Activated CD4-positive, alpha-beta T cell treated with anti-CD3 and anti-CD28 coated beads for 36 hours (primary cell): ENCODE measurements at regions of chr1 and their contacts with region 1.

Region 1: DNA sequence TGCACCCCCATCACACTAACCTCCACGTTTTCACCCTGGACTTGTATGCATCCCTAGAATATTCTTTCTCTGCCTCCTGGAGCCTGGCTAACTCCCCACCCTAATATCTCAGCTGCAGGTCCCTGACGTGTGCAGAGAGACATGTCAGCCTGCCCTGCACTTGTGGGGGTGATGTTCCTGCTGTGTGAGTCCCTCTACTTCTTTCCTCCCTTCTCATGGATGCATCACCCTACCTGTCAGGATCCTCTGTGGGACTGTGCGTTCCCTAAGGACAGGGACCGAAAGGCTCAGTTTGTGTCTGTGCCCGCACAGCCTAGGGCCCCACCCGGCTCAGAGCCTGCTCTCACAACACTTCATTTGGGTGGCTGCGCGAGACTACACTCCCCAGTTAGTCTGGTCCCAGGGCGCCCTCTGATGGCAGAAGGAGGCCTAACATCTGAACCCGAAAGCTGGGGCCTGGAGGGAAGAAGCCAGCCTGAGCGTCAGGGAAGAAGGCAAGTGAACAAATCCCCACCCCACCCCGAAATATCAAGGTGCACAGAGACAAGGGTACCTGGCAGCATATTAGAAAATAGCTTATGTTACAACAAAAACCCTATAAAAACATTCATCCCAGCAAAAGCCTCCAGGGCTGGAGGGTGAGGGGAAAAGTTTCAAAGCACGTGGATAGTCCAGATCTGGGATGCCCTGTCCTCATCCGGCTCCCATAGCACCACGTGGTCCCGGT is 3.7 kb downstream of the CD52 start:
- DNase-seq: peak; percentile 97
- ATAC-seq: peak; percentile 62
- H3K4me3 Mint-ChIP-seq: peak overlapping the region; percentile 59
- H3K27ac Mint-ChIP-seq: peak overlapping the region; percentile 96
- H3K4me1 Mint-ChIP-seq: peaks cover 51% of the 10 kb centered on the region
- H3K27me3 Mint-ChIP-seq: no peaks in the 10 kb centered on the region

Region 2: DNA sequence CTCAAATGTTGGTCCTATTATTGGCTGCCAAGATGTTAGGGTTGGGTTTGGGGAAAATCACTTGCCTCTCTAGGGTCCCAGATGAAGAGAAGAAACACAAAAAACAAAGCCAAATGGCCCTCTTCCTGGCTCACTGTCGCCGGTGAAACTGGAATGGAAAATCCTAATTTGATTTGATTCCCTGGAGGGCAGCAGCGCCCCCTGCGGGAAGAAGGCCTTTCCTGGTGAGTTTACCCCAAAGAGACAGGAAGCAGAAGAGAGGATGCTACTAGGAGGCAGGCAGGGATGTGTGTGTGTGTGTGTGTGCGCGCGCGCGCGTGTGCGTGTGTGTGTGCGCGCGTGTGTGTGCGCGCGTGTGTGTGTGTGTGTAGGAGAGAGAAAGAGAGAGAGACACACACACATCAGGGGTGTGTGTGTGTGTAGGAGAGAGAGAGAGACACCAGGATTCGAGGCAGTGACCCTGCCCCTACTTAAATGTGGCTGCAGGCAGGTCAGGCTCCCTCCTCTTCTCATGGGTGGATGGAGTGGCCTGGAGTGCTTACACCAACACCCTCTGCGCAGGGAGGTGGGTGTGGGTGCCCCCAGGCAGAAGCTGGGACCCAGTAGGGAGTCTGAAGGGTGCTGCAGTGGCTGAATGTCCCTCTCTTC is 524.5 kb before region 1 on chr1:
- CTCF ChIA-PET with region 1: no interaction called
- POLR2A ChIA-PET with region 1: no interaction called
- intact Hi-C with region 1: no loop called
- DNase-seq: peak; percentile 93
- ATAC-seq: peak; percentile 61
- H3K4me3 Mint-ChIP-seq: peak overlapping the region; percentile 56
- H3K27ac Mint-ChIP-seq: peak overlapping the region; percentile 95
- H3K4me1 Mint-ChIP-seq: peaks cover 62% of the 10 kb centered on the region
- H3K27me3 Mint-ChIP-seq: no peaks in the 10 kb centered on the region

Region 3: DNA sequence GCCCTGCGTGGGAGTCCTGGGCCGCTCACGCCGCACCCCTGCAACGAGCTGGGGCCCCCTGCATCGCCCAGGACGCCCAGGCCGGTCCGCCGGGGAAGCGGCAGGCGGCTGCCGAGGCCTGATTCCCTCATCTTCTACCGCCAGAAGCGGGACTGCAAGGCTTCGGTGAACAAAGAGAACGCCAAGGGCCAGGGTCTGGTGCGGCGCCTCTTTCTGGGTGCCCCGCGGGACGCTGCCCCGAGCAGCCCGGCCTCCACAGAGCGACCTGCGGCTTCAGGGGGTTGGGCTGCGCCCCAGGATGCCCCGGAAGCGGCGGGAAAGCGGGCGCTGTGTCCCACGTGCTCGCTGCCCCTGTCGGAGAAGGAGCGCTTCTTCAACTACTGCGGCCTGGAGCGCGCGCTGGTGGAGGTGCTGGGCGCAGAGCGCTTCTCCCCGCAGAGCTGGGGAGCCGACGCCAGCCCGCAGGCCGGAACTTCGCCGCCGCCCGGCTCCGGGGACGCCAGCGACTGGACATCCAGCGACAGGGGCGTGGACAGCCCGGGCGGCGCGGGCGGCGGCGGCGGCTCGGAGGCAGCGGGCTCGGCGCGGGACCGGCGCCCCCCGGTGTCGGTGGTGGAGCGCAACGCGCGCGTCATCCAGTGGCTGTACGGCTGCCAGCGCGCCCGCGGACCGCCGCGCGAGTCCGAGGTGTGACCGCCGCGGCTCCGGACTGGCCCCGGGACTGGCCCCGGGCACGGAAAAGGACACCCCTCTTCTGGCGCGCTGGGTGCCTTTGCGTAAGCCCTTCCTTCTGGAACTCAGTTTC is 159.9 kb before region 1 on chr1:
- CTCF ChIA-PET with region 1: interaction called, 4 read pairs
- POLR2A ChIA-PET with region 1: no interaction called
- intact Hi-C with region 1: loop called in 1 of 2 experiments (anchors 2 kb)
- DNase-seq: peak; percentile 67
- ATAC-seq: peak; percentile 47
- H3K4me3 Mint-ChIP-seq: peak overlapping the region; percentile 39
- H3K27ac Mint-ChIP-seq: no peak overlapping the region
- H3K4me1 Mint-ChIP-seq: peaks cover 10% of the 10 kb centered on the region
- H3K27me3 Mint-ChIP-seq: peaks cover 15% of the 10 kb centered on the region

Region 4: DNA sequence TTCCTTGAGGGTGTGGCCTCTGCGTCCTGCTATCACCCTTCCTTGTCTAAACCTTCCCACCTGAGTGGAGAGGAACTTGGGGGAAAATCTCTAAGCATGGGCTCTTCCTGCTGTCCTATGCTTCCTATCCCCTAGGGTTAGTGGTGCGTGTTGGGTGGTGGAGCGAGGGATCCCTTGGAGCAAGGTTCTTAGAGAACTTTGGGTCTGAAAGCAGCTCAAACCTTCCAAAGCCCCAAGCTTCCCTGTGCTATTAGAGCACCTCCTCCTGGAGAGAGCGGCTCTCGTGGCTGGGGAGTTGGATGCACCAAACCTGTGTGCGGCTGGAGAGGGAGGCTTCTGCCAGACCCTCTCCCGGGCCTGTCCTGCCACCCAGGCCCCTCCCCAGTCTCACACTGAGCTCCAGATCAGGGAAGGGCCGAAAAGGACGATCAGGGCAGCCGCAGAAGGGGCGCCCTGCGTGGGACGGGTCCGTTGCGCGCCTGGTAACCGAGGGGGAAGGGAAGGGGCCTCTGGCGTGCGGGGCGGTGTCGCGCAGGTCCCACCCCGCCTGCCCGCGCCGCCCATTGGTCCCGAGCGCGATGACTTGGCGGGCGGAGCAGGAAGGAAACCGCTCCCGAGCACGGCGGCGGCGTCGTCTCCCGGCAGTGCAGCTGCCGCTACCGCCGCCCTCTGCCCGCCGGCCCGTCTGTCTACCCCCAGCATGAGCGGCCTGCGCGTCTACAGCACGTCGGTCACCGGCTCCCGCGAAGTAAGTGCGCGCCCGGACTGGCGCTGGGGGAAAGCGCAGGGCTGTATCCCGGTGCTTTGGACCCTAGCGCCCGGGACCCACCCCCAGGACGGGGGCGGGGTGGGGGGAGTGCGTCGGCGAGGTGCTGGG is 41.8 kb before region 1 on chr1 and contains the start of gene SH3BGRL3:
- CTCF ChIA-PET with region 1: interaction called, 399 read pairs
- POLR2A ChIA-PET with region 1: interaction called, 16 read pairs
- intact Hi-C with region 1: loop called (anchors 1 kb)
- DNase-seq: peak; percentile 92
- ATAC-seq: peak; percentile 56
- H3K4me3 Mint-ChIP-seq: peak within 1 kb of the TSS; percentile 78
- H3K27ac Mint-ChIP-seq: peak within 1 kb of the TSS; percentile 94
- H3K4me1 Mint-ChIP-seq: peaks cover 82% of the 10 kb centered on the region
- H3K27me3 Mint-ChIP-seq: no peaks in the 10 kb centered on the region
- total RNA-seq, gene SH3BGRL3: 267 to 381 TPM

Region 5: GRCh38 chr1:26336477-26337205 is 15.2 kb after region 1 on chr1:
- CTCF ChIA-PET with region 1: no interaction called
- POLR2A ChIA-PET with region 1: no interaction called
- intact Hi-C with region 1: loop called in 1 of 2 experiments (anchors 1 kb)
- DNase-seq: peak; percentile 89
- ATAC-seq: peak; percentile 93
- H3K4me3 Mint-ChIP-seq: peak overlapping the region; percentile 75
- H3K27ac Mint-ChIP-seq: no peak overlapping the region
- H3K4me1 Mint-ChIP-seq: no peaks in the 10 kb centered on the region
- H3K27me3 Mint-ChIP-seq: no peaks in the 10 kb centered on the region

Region 6: DNA sequence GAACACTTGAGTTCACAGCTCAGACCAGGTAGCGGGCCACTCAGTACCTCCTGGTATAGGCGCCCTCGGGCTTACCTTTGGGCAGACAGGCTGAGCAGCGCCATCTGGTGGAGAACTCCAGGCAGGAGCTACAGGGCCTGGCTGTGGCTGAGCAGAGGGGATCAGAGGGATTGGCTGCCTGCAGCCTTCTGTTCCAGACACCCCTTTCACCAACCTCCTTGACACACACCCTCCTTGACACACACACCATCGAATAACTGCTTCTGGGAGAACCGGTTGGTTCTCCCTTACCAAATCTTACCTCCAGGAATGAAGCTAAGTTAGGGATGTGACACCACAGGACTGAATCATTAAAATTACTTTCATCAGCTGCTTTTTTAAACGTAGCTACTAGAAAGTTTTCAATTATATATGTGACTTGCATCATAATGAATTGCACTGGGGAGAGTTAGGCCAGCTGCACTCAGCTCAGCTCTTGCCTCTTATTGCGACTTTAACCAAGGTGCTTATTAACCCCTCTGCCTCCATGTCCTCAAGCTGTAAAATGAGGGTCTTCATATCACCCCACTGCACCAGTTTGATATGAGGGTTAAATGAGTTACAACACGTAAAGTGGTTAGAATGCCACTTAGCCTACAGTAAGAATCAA is 95.8 kb after region 1 on chr1:
- CTCF ChIA-PET with region 1: interaction called, 12 read pairs
- POLR2A ChIA-PET with region 1: no interaction called
- intact Hi-C with region 1: loop called in 1 of 2 experiments (anchors 1 kb)
- DNase-seq: peak; percentile 93
- ATAC-seq: peak; percentile 100
- H3K4me3 Mint-ChIP-seq: no peak overlapping the region
- H3K27ac Mint-ChIP-seq: no peak overlapping the region
- H3K4me1 Mint-ChIP-seq: no peaks in the 10 kb centered on the region
- H3K27me3 Mint-ChIP-seq: peaks cover 19% of the 10 kb centered on the region

Region 7: DNA sequence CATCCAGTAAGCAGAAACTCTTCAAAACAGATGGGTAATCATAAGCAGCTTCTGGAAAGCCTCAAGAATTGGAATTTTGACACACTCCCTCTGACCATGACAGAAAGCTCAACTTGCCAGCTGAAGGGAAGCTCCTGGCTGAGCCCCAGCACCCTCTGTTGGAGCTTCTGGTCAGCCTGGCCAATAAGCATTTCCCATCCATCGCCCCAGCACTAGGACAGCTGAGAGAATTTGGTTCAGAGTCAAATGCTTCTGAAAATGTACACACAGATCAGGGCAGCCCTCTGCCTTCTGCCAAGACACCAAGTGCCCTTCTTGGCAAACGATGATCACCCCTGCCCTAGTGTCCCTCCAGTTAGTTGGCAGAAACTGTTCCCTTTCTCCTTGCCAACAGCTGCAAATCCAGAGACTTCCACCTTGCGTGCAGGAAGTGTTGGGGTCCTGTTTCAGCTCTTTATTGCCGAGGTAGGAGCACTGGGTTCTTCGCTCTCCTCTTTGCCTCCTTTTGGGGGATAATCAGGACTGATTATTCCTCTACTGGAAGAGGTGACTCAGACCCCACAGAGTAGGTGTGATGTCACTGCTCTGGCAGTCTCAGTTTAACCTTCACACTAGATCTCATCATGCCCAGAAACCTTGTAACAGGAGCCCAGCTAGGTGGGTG is 478.1 kb after region 1 on chr1:
- CTCF ChIA-PET with region 1: no interaction called
- POLR2A ChIA-PET with region 1: no interaction called
- intact Hi-C with region 1: no loop called
- DNase-seq: peak; percentile 48
- ATAC-seq: peak; percentile 78
- H3K4me3 Mint-ChIP-seq: no peak overlapping the region
- H3K27ac Mint-ChIP-seq: peak overlapping the region; percentile 90
- H3K4me1 Mint-ChIP-seq: peaks cover 37% of the 10 kb centered on the region
- H3K27me3 Mint-ChIP-seq: no peaks in the 10 kb centered on the region